GM18951 (cell line): ENCODE measurements at regions of chr11 and their contacts with region 1.

Region 1: GRCh38 chr11:61336171-61336922 is 3.3 kb downstream of the TKFC start:
- POLR2A ChIP-seq: no peak

Region 2: GRCh38 chr11:61384271-61385242 is 48.2 kb after region 1 on chr11:
- in situ Hi-C with region 1: loop called (anchors 5 kb)
- POLR2A ChIP-seq: no peak

Region 3: DNA sequence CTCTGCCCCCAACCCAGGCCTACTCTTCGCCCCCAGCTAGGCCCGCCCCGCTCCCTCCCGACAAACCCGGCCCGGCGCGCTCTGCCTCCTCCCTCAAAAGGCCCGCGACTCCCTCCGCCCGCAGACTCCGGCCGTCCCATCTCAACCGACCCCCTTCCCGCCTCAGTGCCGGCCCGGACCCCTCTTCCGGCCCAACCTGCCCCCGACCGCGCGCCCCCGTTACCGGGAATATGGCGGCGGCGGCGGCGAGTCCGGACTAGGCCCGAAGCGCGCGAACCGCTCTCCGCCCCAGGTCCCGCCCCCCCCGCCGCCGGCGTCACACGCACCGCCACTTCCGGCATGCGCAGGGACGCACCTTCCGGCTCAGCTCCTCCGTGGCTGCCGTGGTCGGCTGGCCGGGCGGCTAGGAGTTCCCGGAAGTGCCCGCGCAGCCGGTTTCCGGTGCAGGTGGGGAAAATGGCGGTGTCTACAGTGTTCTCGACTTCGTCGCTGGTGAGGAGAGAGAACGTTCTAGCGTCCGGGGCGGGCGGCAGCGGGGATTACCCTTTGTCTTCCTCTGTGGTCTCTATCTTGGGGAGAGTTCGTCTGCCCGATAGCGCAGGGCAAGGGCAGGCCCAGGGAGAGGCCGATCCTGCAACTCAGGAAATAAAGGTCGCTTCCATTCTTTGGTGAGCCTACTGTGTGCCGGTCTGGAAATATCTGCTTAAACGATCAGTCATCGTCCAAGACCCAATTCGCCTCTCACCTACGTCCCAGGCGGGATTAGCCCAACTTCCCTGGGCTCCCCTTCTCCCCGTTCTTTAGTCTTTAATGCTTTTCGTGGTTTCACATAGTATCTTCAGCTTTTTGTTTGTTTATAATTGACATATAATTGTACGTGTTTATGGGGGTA is 93.6 kb after region 1 on chr11 and contains the starts of genes CPSF7 and SDHAF2:
- in situ Hi-C with region 1: no loop called
- POLR2A ChIP-seq: peak; percentile 84